ENCODE measurements at regions of chr7 and their contacts with region 1.

Region 1: DNA sequence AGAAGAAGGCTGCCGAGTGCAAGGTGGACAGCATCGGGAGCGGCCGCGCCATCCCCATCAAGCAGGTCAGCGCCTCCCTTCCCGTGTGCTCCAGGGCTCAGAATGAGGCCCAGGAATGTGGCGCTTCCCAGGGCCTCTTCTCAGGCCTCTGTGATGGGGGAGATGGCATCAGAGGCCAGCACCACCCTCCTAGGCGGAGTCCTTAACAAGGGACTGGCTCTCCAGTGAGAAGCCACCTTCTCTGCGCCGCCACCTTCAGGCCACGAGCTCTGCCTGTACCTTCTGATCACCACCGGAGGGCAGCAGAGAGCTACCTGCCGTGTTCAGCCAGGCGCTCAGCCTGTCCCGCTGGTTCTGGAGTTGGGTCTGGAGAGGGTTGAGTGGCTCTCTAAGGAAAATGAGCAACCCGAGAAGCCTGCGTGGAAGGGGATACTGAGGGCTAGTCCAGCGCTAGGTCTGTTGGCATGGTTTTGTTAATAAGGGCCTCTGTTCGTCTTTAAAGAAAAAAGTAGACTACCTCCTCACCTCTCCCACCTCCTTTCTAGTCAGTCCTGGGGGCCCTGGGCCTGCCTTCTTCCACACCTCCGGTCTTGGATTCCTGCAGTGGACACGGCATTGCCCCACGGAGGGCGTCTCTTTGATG is 37.7 kb downstream of the AGAP3 start:
- DNase-seq: peak; percentile 82
- H3K4me3 Mint-ChIP-seq: no peak overlapping the region
- H3K27ac Mint-ChIP-seq: no peak overlapping the region
- H3K4me1 Mint-ChIP-seq: peaks cover 6% of the 10 kb centered on the region
- H3K27me3 Mint-ChIP-seq: no peaks in the 10 kb centered on the region
- CTCF ChIP-seq: peak; percentile 96

Region 2: GRCh38 chr7:150895809-150896208 is 228.1 kb before region 1 on chr7:
- CTCF ChIA-PET with region 1: no interaction called
- POLR2A ChIA-PET with region 1: no interaction called
- intact Hi-C with region 1: no loop called
- DNase-seq: no peak
- H3K4me3 Mint-ChIP-seq: no peak overlapping the region
- H3K27ac Mint-ChIP-seq: no peak overlapping the region
- H3K4me1 Mint-ChIP-seq: no peaks in the 10 kb centered on the region
- H3K27me3 Mint-ChIP-seq: peaks cover 26% of the 10 kb centered on the region
- CTCF ChIP-seq: no peak

Region 3: DNA sequence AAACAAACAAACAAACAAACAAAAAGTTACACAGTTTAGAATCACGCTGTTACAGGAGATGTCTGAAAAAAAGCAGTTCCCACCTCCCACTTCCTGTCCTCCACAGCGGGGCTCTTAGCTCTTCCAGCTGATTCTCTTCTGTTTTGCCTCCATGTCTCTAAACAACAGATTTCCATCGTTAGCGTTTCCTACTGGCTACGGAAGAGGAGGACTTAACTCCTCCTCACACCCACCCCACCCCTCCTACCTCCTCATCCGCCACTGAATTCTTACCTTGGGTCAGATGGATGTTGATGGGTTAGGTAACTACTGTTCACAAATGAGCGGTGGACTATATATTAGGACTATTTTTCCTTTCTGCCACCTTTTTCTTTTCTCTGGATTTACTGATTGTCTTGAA is 180.9 kb after region 1 on chr7:
- CTCF ChIA-PET with region 1: interaction called, 4 read pairs
- POLR2A ChIA-PET with region 1: no interaction called
- intact Hi-C with region 1: loop called (anchors 1 kb)
- DNase-seq: no peak
- H3K4me3 Mint-ChIP-seq: no peak overlapping the region
- H3K27ac Mint-ChIP-seq: no peak overlapping the region
- H3K4me1 Mint-ChIP-seq: peaks cover 7% of the 10 kb centered on the region
- H3K27me3 Mint-ChIP-seq: peaks cover 57% of the 10 kb centered on the region
- CTCF ChIP-seq: no peak

Measured in MCF 10A (cell line).